Activated CD4-positive, alpha-beta memory T cell treated with anti-CD3 and anti-CD28 coated beads for 36 hours (primary cell): ENCODE measurements at regions of chr11 and their contacts with region 1.

Region 1: DNA sequence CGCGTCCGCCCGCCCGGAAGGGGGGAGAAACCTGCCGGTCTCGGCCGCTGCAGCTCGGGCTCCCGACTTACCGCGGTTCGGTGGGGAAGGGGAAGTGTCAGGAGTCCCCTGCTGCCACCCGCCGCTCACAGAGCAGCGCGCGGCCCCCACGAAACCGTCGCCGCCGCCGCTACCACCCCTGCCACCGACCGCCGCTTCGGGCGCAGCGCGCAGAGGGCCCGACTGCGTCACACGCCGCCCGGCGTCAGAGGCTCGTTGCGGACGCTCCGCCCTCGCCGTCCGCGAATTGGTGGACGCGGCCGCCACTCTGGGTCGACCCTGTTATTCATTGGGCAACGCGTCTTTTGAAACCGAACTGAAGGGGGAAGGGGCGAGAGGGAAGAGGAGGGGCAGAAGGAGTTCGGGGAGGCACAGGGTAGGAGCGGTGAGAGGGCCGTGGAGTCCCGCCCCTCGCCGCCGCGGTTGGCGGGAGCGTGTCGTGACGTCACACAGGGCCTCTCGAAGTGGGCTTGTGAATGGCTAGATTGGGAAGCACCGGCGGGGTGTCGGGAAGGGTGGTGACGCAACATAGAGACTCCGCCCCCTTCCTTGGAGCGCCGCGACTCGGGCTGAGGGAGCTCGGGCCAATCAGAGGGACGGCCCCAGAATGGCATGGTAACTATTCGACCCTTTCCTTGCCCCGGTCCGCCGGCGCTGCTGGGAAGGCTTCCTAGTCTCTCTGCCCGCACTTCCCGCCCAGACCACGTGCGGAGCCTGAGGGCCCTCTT is at the start of gene NUP98:
- DNase-seq: peak; percentile 100
- H3K4me3 Mint-ChIP-seq: peak within 1 kb of the TSS; percentile 90
- H3K27ac Mint-ChIP-seq: peak within 1 kb of the TSS; percentile 96
- H3K4me1 Mint-ChIP-seq: peaks cover 40% of the 10 kb centered on the region
- H3K27me3 Mint-ChIP-seq: no peaks in the 10 kb centered on the region
- total RNA-seq, gene NUP98: 90.6 to 104 TPM

Region 2: DNA sequence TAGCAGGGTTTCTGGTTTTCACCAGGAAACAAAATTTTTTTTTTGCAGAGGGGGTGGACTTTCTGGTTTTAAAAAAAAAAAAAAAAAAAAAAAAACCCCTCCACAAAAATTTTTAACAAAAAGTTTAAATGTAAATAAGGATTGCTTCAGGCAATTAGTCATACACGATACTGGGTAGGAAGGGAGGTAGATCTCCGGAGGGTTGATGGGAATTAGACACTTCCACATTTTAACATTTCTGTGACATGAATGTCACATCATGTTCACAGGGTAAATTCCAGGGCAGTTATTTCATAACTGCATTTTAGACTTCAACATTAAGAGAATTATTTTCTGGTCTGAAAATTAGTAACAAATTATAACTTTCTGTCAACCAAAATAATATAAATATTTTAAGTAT is 16.1 kb before region 1 on chr11:
- CTCF ChIA-PET with region 1: interaction called, 4 read pairs
- POLR2A ChIA-PET with region 1: interaction called, 18 read pairs
- intact Hi-C with region 1: loop called (anchors 1 kb)
- DNase-seq: no peak
- H3K4me3 Mint-ChIP-seq: no peak overlapping the region
- H3K27ac Mint-ChIP-seq: peak overlapping the region; percentile 33
- H3K4me1 Mint-ChIP-seq: peaks cover 54% of the 10 kb centered on the region
- H3K27me3 Mint-ChIP-seq: no peaks in the 10 kb centered on the region

Region 3: DNA sequence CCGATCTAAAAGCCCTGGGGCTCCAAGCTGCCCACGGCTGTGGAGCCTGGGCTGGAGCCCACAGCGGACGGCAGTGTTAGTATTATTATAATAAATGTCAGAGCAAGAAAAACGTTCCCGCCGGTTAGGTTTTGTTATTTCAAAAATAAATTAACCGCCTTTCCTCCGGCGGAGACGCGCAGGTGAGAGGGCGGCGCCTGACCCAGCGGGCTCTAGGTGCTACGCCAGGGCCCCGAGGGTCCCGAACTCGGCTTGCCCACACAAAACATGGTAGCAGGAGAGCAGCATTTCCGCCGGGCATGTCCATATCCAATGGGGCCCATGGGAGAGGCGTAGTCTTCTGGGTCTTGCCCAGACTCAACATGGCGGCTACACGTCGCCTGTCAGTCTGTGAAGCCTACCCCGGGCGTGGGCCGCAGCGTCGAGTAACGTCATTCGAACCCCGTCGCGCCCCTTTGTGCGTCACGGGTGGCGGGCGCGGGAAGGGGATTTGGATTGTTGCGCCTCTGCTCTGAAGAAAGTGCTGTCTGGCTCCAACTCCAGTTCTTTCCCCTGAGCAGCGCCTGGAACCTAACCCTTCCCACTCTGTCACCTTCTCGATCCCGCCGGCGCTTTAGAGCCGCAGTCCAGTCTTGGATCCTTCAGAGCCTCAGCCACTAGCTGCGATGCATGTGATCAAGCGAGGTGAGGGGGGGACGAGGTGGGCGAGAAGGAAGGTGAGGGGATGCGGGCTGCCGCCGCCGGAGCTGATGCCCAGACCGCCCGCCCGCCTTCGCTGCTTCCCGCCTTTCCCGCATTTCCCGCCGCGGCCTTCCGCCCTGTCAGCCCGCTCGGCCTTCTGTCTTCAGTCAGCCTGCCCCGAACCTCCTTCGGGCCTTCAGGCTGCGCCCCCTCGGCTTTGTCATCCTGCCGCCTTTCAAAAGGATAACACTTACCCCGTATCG is 297.1 kb after region 1 on chr11 and contains the start of gene RRM1:
- CTCF ChIA-PET with region 1: no interaction called
- POLR2A ChIA-PET with region 1: no interaction called
- intact Hi-C with region 1: loop called (anchors 1 kb)
- DNase-seq: peak; percentile 97
- H3K4me3 Mint-ChIP-seq: peak within 1 kb of the TSS; percentile 95
- H3K27ac Mint-ChIP-seq: peak within 1 kb of the TSS; percentile 92
- H3K4me1 Mint-ChIP-seq: peaks cover 71% of the 10 kb centered on the region
- H3K27me3 Mint-ChIP-seq: no peaks in the 10 kb centered on the region
- total RNA-seq, gene RRM1: 201 to 203 TPM

Region 4: GRCh38 chr11:4203603-4204360 is 406.3 kb after region 1 on chr11:
- CTCF ChIA-PET with region 1: no interaction called
- POLR2A ChIA-PET with region 1: no interaction called
- intact Hi-C with region 1: no loop called
- DNase-seq: no peak
- H3K4me3 Mint-ChIP-seq: no peak overlapping the region
- H3K27ac Mint-ChIP-seq: no peak overlapping the region
- H3K4me1 Mint-ChIP-seq: no peaks in the 10 kb centered on the region
- H3K27me3 Mint-ChIP-seq: peaks cover 13% of the 10 kb centered on the region